Activated B cell treated with CpG ODN at 0.5 μM for 24 hours (primary cell): ENCODE measurements at regions of chr3 and their contacts with region 1.

Region 1: GRCh38 chr3:20125897-20126296 is 60.1 kb downstream of the SGO1 start:
- DNase-seq: peak; percentile 39
- ATAC-seq: peak; percentile 95
- H3K4me3 Mint-ChIP-seq: peak overlapping the region; percentile 58
- H3K27ac Mint-ChIP-seq: peak overlapping the region; percentile 87
- H3K4me1 Mint-ChIP-seq: peaks cover 38% of the 10 kb centered on the region
- H3K27me3 Mint-ChIP-seq: no peaks in the 10 kb centered on the region
- CTCF ChIP-seq: no peak

Region 2: GRCh38 chr3:20054549-20054987 is 71.3 kb before region 1 on chr3:
- CTCF ChIA-PET with region 1: no interaction called
- POLR2A ChIA-PET with region 1: no interaction called
- intact Hi-C with region 1: loop called (anchors 1 kb)
- DNase-seq: peak; percentile 22
- ATAC-seq: peak; percentile 92
- H3K4me3 Mint-ChIP-seq: no peak overlapping the region
- H3K27ac Mint-ChIP-seq: no peak overlapping the region
- H3K4me1 Mint-ChIP-seq: peaks cover 33% of the 10 kb centered on the region
- H3K27me3 Mint-ChIP-seq: no peaks in the 10 kb centered on the region
- CTCF ChIP-seq: no peak

Region 3: DNA sequence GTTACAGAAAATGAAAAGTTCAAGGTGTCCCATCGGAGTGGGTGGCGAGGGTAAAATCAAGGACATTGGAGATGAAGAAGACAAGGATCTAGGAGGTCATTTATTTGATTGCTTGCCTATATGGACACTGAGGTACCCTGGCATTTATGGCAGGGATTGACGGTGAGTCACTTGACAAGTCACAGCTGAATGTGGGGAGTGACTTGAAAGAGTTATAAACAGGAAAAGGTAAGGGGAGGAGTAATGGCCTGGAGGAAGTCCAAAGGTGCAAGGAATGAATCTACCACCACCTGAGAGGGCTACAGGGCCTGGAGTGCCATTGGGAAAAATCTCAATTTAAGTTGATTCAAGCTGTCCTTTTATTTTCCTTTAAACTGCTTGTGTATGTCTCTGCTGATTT is 71.9 kb after region 1 on chr3:
- CTCF ChIA-PET with region 1: no interaction called
- POLR2A ChIA-PET with region 1: no interaction called
- intact Hi-C with region 1: no loop called
- DNase-seq: no peak
- ATAC-seq: no peak
- H3K4me3 Mint-ChIP-seq: no peak overlapping the region
- H3K27ac Mint-ChIP-seq: no peak overlapping the region
- H3K4me1 Mint-ChIP-seq: peaks cover 2% of the 10 kb centered on the region
- H3K27me3 Mint-ChIP-seq: no peaks in the 10 kb centered on the region
- CTCF ChIP-seq: no peak